ENCODE measurements at regions of chr4 and their contacts with region 1.

Region 1: DNA sequence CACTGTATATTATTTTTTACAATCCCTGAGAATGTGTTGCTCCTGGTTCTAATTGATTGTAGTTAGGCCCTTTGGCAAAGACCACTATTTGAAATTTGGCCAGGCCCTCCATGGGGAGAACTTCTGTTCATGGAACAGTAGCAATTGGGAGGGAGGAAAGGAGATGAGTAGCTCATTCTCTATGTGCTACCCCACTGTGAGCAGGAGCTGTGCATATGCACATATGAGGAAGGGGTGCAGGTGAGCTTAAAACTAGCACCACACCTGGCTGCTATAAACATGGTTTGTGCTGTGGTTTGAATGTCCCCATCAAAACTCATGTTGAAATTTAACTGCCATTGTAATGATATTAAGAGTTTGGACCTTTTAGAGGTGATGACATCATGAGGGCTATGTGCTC is 1483.2 kb downstream of the PCDH7 start:
- DNase-seq: no peak
- H3K4me3 ChIP-seq: no peak overlapping the region
- H3K27ac ChIP-seq: no peak overlapping the region
- H3K4me1 ChIP-seq: no peaks in the 10 kb centered on the region
- H3K27me3 ChIP-seq: no peaks in the 10 kb centered on the region
- CTCF ChIP-seq: no peak
- POLR2A ChIP-seq: no peak

Region 2: DNA sequence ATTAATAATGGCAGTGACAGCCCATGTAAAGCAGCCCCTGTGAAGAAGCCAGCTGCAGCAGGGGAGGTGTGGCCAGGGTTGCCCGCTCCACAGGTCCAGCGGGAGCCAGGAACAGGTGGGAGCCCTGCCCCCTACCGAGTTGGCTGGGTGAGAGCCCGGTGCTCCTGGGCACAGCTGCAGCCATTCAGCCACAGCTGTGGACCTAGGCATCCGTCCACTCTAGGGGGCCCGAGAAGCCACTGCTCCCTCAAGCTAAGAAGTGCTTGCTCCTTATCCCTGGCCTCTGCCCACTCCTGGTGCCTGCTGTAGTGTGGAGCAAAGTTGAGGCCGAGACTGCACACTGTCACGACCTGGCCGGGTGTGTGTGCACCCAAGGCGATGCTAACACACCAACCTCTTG is 14.2 kb before region 1 on chr4:
- intact Hi-C with region 1: loop called (anchors 2 kb)
- DNase-seq: no peak
- H3K4me3 ChIP-seq: no peak overlapping the region
- H3K27ac ChIP-seq: no peak overlapping the region
- H3K4me1 ChIP-seq: no peaks in the 10 kb centered on the region
- H3K27me3 ChIP-seq: no peaks in the 10 kb centered on the region
- CTCF ChIP-seq: no peak
- POLR2A ChIP-seq: no peak

Region 3: GRCh38 chr4:32349026-32349425 is 145.7 kb after region 1 on chr4:
- intact Hi-C with region 1: no loop called
- DNase-seq: no peak
- H3K4me3 ChIP-seq: no peak overlapping the region
- H3K27ac ChIP-seq: no peak overlapping the region
- H3K4me1 ChIP-seq: no peaks in the 10 kb centered on the region
- H3K27me3 ChIP-seq: no peaks in the 10 kb centered on the region
- CTCF ChIP-seq: no peak
- POLR2A ChIP-seq: no peak

Measured in breast epithelium (tissue), 4 donors.